Naive thymus-derived CD4-positive, alpha-beta T cell (primary cell): ENCODE measurements at regions of chr3 and their contacts with region 1.

Region 1: DNA sequence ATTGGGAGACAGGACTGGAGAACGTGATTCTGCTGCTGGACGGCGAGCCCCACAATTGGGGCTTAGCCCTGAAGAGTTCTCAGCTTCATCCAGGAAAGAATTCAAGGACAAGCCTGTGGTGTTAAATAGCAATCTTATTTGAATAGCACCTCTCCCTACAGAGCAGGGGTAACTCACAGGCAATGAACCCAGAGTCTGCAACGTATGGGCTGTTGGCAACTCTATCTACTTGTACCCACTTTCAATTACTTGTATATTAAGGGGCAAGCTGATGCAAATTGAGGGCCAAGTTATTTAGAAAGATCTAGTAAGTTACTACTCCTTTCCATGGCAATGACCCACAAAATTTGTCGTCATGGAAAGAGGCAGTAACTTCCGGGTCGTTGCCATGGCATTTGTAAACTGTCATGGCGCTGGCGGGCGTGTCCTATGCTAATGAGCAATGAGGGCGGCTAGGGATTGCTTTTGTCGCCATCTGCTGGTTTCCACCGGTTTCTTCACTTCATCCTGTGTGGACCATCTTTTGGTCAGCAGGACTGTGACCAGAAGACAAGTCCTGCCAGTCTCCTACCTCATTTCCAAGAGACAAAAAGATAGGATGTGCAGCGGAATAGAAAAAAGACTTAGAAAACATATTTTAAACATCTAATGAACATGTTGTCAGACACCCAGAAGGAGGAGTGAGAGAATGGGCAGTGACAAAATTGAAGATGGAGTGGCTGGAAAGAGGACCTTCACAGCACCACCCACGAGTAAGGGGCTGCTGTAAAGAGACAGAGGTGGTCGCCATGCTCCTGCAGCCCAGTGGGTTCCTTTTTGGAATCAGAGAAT is 45.8 kb upstream of the SH3BP5 start:
- DNase-seq: peak; percentile 80 to 96 (median 93)
- ATAC-seq: peak; percentile 99
- H3K4me3 ChIP-seq: no peak overlapping the region
- H3K4me3 Mint-ChIP-seq: peak overlapping the region in 5 of 10 donors; percentile 9 to 54 (median 17)
- H3K27ac ChIP-seq: peak overlapping the region; percentile 76
- H3K27ac Mint-ChIP-seq: peak overlapping the region; percentile 78 to 97 (median 93)
- H3K4me1 ChIP-seq: peaks cover 4 to 5% of the 10 kb centered on the region in 2 donors
- H3K4me1 Mint-ChIP-seq: peaks cover 8 to 14% (median 13%) of the 10 kb centered on the region in 7 donors
- H3K27me3 ChIP-seq: no peaks in the 10 kb centered on the region
- H3K27me3 Mint-ChIP-seq: no peaks in the 10 kb centered on the region

Region 2: DNA sequence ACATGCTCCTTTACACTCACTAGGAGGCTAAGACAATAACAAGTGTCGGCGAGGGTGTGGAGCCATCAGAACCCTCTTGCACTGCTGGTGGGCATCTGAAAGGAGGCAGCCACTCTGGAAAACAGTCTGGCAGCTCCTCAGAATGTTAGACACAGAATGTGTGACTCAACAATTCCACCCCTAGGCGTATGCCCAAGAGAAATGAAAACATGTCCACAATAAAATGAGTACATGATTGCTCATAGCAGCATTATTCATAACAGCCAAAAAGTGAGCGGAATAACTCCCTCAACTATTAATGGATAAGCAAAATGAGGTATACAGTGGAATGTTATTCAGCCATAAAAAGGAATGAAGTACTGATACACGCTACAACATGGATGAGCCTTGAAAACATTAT is 1556.1 kb before region 1 on chr3:
- CTCF ChIA-PET with region 1: no interaction called
- POLR2A ChIA-PET with region 1: no interaction called
- intact Hi-C with region 1: no loop called
- DNase-seq: no peak
- ATAC-seq: no peak
- H3K4me3 ChIP-seq: no peak overlapping the region
- H3K4me3 Mint-ChIP-seq: no peak overlapping the region
- H3K27ac ChIP-seq: no peak overlapping the region
- H3K27ac Mint-ChIP-seq: peak overlapping the region in 3 of 9 donors; percentile 26 to 70 (median 57)
- H3K4me1 ChIP-seq: no peaks in the 10 kb centered on the region
- H3K4me1 Mint-ChIP-seq: peaks cover 0 to 26% (median 9%) of the 10 kb centered on the region in 7 donors
- H3K27me3 ChIP-seq: no peaks in the 10 kb centered on the region
- H3K27me3 Mint-ChIP-seq: peaks cover 0 to 3% (median 0%) of the 10 kb centered on the region in 5 donors

Region 3: DNA sequence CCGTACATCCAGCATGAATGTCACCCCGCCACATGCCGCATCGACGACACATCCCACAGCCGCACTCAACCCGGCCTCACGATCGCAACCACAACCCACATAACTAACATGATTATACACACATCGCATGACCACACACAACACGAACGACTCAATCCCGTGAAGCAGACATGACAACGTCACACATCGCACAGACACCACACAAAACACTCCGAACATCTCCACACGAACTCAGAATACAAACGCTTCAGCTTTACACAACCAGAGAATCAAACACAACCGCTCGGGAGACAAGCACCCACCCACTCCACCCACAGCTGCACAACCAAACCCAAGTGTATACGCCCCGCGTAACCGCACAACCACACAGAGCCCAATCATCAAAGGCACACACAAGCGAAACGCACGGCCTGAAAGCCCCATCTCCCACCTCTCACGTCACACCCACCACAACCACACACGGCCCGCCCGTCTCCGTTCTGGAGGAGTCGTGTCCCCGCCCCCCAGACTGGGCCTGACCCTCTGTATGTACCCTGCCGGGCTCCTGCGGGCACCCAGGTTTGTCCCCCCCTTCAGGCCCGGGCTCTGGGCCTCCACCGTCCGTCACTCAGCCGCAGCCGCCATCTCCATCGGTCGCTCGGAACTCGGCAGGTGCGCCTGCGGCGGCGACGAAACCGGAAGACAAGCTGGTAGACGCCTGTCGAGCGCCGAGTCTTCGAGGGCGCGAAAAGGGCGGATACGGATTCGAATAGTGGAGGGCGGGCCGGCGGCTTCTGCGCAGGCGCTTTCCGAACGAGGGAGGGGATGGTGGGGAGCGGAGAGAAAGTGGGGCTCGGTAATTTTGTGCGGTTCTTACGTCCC is 279.4 kb before region 1 on chr3 and contains the start of gene RBSN:
- CTCF ChIA-PET with region 1: no interaction called
- POLR2A ChIA-PET with region 1: no interaction called
- intact Hi-C with region 1: loop called (anchors 1 to 5 kb)
- DNase-seq: peak; percentile 87 to 96 (median 94)
- ATAC-seq: peak; percentile 87
- H3K4me3 ChIP-seq: peak within 1 kb of the TSS; percentile 83
- H3K4me3 Mint-ChIP-seq: peak within 1 kb of the TSS; percentile 90 to 99 (median 96)
- H3K27ac ChIP-seq: peak within 1 kb of the TSS; percentile 96
- H3K27ac Mint-ChIP-seq: peak within 1 kb of the TSS; percentile 90 to 99 (median 98)
- H3K4me1 ChIP-seq: peaks cover 8 to 14% of the 10 kb centered on the region in 2 donors
- H3K4me1 Mint-ChIP-seq: peaks cover 21 to 42% (median 30%) of the 10 kb centered on the region in 7 donors
- H3K27me3 ChIP-seq: no peaks in the 10 kb centered on the region
- H3K27me3 Mint-ChIP-seq: peaks cover 0 to 9% (median 2%) of the 10 kb centered on the region in 5 donors
- total RNA-seq, gene RBSN: 20.5 to 54.4 (median 39.6) TPM

Region 4: GRCh38 chr3:15268033-15268631 is 110.0 kb before region 1 on chr3:
- CTCF ChIA-PET with region 1: interaction called, 68 read pairs
- POLR2A ChIA-PET with region 1: interaction called, 11 read pairs
- intact Hi-C with region 1: loop called (anchors 1 kb)
- DNase-seq: peak; percentile 75 to 88 (median 82)
- ATAC-seq: peak; percentile 56
- H3K4me3 ChIP-seq: peak overlapping the region; percentile 4
- H3K4me3 Mint-ChIP-seq: peak overlapping the region in 9 of 10 donors; percentile 8 to 72 (median 56)
- H3K27ac ChIP-seq: no peak overlapping the region
- H3K27ac Mint-ChIP-seq: peak overlapping the region; percentile 32 to 84 (median 70)
- H3K4me1 ChIP-seq: peaks cover 54 to 69% of the 10 kb centered on the region in 2 donors
- H3K4me1 Mint-ChIP-seq: peaks cover 45 to 90% (median 73%) of the 10 kb centered on the region in 7 donors
- H3K27me3 ChIP-seq: no peaks in the 10 kb centered on the region
- H3K27me3 Mint-ChIP-seq: peaks cover 0 to 3% (median 0%) of the 10 kb centered on the region in 5 donors

Region 5: DNA sequence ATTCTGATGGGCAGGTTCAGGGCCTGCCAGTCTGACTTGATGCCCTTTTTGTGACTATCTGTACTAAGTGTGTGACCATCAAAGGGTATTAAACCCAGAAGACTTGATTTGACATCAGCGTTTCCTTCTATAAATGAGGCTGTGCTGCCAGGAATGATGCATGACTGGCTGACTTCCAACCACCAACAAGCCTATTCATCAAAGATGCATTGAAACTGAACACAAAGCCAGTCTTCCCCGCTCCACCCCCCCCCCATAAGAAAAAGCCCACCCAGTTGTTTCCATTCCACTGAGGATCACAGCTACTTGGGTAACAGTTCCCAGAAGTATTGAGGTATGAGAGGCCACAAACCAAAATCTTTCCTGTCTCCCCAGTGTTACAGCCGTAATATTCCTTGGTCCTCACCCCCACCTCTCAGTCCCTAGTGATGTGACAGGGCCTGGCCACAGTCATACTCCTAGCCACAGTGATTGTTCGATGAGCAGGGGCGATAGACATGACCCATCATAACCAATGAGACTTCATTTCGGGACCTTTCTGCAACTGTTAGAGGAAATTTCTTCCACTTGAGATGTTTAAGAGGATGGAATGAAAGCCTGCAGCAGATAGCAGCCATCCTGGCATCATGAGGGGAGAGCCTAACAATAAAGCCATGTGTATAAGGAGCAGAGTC is 68.4 kb before region 1 on chr3:
- CTCF ChIA-PET with region 1: interaction called, 3 read pairs
- POLR2A ChIA-PET with region 1: no interaction called
- intact Hi-C with region 1: loop called (anchors 1 kb)
- DNase-seq: no peak
- ATAC-seq: no peak
- H3K4me3 ChIP-seq: no peak overlapping the region
- H3K4me3 Mint-ChIP-seq: peak overlapping the region in 6 of 10 donors; percentile 17 to 69 (median 46)
- H3K27ac ChIP-seq: no peak overlapping the region
- H3K27ac Mint-ChIP-seq: peak overlapping the region in 8 of 9 donors; percentile 23 to 89 (median 66)
- H3K4me1 ChIP-seq: peaks cover 44 to 52% of the 10 kb centered on the region in 2 donors
- H3K4me1 Mint-ChIP-seq: peaks cover 36 to 72% (median 63%) of the 10 kb centered on the region in 7 donors
- H3K27me3 ChIP-seq: no peaks in the 10 kb centered on the region
- H3K27me3 Mint-ChIP-seq: no peaks in the 10 kb centered on the region

Region 6: GRCh38 chr3:15356186-15356585 is 22.0 kb before region 1 on chr3:
- CTCF ChIA-PET with region 1: no interaction called
- POLR2A ChIA-PET with region 1: no interaction called
- intact Hi-C with region 1: loop called (anchors 1 to 2 kb)
- DNase-seq: no peak
- ATAC-seq: no peak
- H3K4me3 ChIP-seq: peak overlapping the region; percentile 40
- H3K4me3 Mint-ChIP-seq: peak overlapping the region; percentile 67 to 88 (median 76)
- H3K27ac ChIP-seq: peak overlapping the region; percentile 67
- H3K27ac Mint-ChIP-seq: peak overlapping the region; percentile 87 to 99 (median 93)
- H3K4me1 ChIP-seq: peaks cover 19 to 36% of the 10 kb centered on the region in 2 donors
- H3K4me1 Mint-ChIP-seq: peaks cover 28 to 53% (median 45%) of the 10 kb centered on the region in 7 donors
- H3K27me3 ChIP-seq: no peaks in the 10 kb centered on the region
- H3K27me3 Mint-ChIP-seq: no peaks in the 10 kb centered on the region

Region 7: DNA sequence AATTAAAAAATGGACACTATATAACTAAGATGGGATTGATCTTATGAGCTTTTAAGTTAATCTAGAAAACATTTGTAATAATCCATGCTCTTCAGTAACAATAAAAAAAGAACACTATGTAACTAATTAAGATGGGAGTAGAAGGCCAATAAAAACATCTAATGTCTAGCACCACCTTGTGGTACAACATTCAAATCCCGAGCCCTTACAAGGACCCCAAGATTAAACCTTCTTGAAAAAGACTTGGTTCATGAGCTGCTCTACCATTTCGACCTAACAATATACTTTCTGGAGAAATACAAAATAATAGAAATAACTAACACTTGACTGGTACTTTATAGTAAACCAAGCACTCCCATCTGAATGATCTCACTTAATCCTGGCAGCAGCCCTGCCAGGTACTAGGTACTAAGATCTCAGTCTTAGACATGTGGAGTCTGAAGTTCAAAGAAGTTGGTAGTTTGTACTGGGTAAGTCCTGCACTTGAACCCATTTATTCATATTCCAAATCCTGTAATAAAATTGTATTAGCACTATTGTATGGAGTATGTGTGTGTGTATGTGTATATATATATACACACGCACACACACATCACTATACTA is 27.4 kb after region 1 on chr3:
- CTCF ChIA-PET with region 1: interaction called, 6 read pairs
- POLR2A ChIA-PET with region 1: no interaction called
- intact Hi-C with region 1: loop called (anchors 1 to 2 kb)
- DNase-seq: peak in 7 of 9 donors; percentile 28 to 63 (median 49)
- ATAC-seq: peak; percentile 75
- H3K4me3 ChIP-seq: no peak overlapping the region
- H3K4me3 Mint-ChIP-seq: no peak overlapping the region
- H3K27ac ChIP-seq: no peak overlapping the region
- H3K27ac Mint-ChIP-seq: no peak overlapping the region
- H3K4me1 ChIP-seq: peaks cover 0 to under 1% of the 10 kb centered on the region in 2 donors
- H3K4me1 Mint-ChIP-seq: peaks cover 0 to 7% (median 1%) of the 10 kb centered on the region in 7 donors
- H3K27me3 ChIP-seq: no peaks in the 10 kb centered on the region
- H3K27me3 Mint-ChIP-seq: no peaks in the 10 kb centered on the region

Region 8: GRCh38 chr3:15557511-15557946 is 179.4 kb after region 1 on chr3:
- CTCF ChIA-PET with region 1: no interaction called
- POLR2A ChIA-PET with region 1: no interaction called
- intact Hi-C with region 1: loop called in 1 of 2 experiments (anchors 1 kb)
- DNase-seq: peak; percentile 13 to 73 (median 62)
- ATAC-seq: peak; percentile 92
- H3K4me3 ChIP-seq: no peak overlapping the region
- H3K4me3 Mint-ChIP-seq: peak overlapping the region in 1 of 10 donors; percentile 0
- H3K27ac ChIP-seq: no peak overlapping the region
- H3K27ac Mint-ChIP-seq: peak overlapping the region in 2 of 9 donors; percentile 19 to 64
- H3K4me1 ChIP-seq: peaks cover 0 to 15% of the 10 kb centered on the region in 2 donors
- H3K4me1 Mint-ChIP-seq: peaks cover 0 to 35% (median 11%) of the 10 kb centered on the region in 7 donors
- H3K27me3 ChIP-seq: no peaks in the 10 kb centered on the region
- H3K27me3 Mint-ChIP-seq: no peaks in the 10 kb centered on the region